Esophagus muscularis mucosa (tissue), 4 donors: ENCODE measurements at regions of chr9 and their contacts with region 1.

Region 1: DNA sequence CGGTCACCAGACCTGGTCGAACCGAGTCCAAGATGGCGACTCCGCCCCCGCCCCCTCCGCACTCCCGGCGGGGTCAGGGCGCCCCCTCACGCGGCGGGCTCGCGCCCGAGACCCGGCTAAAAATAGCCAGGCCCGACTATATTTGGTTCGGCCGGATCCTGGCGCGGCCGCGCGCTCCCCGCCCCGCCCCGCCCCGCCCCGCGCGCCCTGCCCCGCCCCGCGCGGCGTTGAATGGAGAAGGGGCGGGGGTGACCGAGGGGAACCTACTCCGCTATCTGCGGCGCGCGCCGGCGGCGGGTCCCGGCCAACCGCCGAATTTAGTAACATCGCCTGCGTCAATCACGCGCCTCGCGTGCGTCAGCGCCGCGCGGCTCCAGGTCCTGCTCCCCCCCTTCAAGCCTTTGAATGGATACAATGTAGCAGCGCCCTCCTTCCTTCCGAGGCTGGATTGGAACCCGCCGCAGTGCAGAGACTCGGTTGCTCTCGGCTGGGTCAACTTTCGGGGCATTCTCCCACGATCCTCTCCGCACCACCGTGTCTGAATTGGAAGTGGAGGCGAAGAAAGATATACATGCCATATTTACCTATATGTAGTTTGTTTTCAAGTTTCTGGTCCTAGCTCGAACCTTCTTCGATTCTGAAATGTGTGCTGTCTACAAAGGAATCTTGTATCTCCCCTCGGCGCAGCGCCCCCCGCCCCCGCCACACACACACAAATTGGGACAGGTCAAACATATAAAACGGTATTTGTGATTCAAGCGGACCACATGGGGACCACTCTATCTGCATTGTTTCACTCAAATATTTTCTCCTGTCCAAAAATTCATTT is 1.6 kb upstream of the NR4A3 start:
- DNase-seq: peak; percentile 98
- H3K4me3 ChIP-seq: peak overlapping the region; percentile 84 to 95 (median 85)
- H3K27ac ChIP-seq: peak overlapping the region; percentile 99 to 100 (median 99)
- H3K4me1 ChIP-seq: peaks cover 28 to 55% (median 41%) of the 10 kb centered on the region in 4 donors
- H3K27me3 ChIP-seq: peaks cover 0 to 9% (median 2%) of the 10 kb centered on the region in 4 donors
- CTCF ChIP-seq: peak in 1 of 3 experiments; percentile 17
- EP300 ChIP-seq: peak; percentile 98
- POLR2A ChIP-seq: peak; percentile 62

Region 2: GRCh38 chr9:99906403-99907207 is 86.5 kb after region 1 on chr9 and contains the start of gene STX17:
- intact Hi-C with region 1: loop called (anchors 5 kb)
- DNase-seq: peak; percentile 95
- H3K4me3 ChIP-seq: peak within 1 kb of the TSS; percentile 70 to 93 (median 85)
- H3K27ac ChIP-seq: peak within 1 kb of the TSS; percentile 93 to 98 (median 97)
- H3K4me1 ChIP-seq: peaks cover 8 to 28% (median 24%) of the 10 kb centered on the region in 4 donors
- H3K27me3 ChIP-seq: no peaks in the 10 kb centered on the region
- CTCF ChIP-seq: no peak
- EP300 ChIP-seq: no peak
- POLR2A ChIP-seq: peak; percentile 82
- total RNA-seq, gene STX17: 29.3 to 46.7 (median 38.4) TPM

Region 3: GRCh38 chr9:99921875-99922710 is 102.0 kb after region 1 on chr9:
- intact Hi-C with region 1: no loop called
- DNase-seq: no peak
- H3K4me3 ChIP-seq: no peak overlapping the region
- H3K27ac ChIP-seq: no peak overlapping the region
- H3K4me1 ChIP-seq: no peaks in the 10 kb centered on the region
- H3K27me3 ChIP-seq: no peaks in the 10 kb centered on the region
- CTCF ChIP-seq: no peak
- EP300 ChIP-seq: no peak
- POLR2A ChIP-seq: no peak

Region 4: GRCh38 chr9:100098887-100099721 is 279.0 kb after region 1 on chr9 and contains the starts of genes ERP44 and INVS:
- intact Hi-C with region 1: loop called (anchors 5 kb)
- DNase-seq: peak; percentile 99
- H3K4me3 ChIP-seq: peak within 1 kb of the TSS; percentile 79 to 84 (median 82)
- H3K27ac ChIP-seq: peak within 1 kb of the TSS; percentile 86 to 95 (median 91)
- H3K4me1 ChIP-seq: peaks cover 20 to 43% (median 31%) of the 10 kb centered on the region in 4 donors
- H3K27me3 ChIP-seq: no peaks in the 10 kb centered on the region
- CTCF ChIP-seq: no peak
- EP300 ChIP-seq: no peak
- POLR2A ChIP-seq: peak; percentile 75
- total RNA-seq, gene ERP44: 12.1 to 13.3 (median 12.7) TPM
- total RNA-seq, gene INVS: 19.2 to 24.1 (median 23.4) TPM